ENCODE measurements at regions of chr17 and their contacts with region 1.

Region 1: DNA sequence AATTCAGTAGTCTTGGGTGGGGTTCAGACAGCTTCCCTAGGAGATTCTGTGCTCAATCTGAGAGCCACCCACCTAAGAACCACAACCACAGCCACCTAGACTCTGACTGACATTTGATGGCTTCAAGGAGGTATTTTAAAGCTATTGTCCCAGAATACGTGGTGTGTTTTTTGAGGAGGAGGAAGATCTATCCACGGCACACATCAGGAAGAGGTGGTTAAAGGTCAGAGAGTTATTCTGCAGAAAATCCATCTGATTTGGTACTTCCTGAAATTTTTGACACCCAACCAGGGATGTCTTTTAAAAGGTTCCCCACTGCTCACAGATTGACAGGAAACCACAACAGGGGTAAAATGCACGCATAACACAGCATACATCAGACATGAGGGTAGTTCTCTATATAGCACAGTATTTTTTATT is 25.1 kb downstream of the SMARCE1 start:
- DNase-seq: peak; percentile 3
- H3K4me3 Mint-ChIP-seq: no peak overlapping the region
- H3K27ac Mint-ChIP-seq: no peak overlapping the region
- H3K4me1 Mint-ChIP-seq: peaks cover 14% of the 10 kb centered on the region
- H3K27me3 Mint-ChIP-seq: peaks cover 56% of the 10 kb centered on the region
- CTCF ChIP-seq: no peak

Region 2: GRCh38 chr17:40559954-40560591 is 62.4 kb before region 1 on chr17:
- CTCF ChIA-PET with region 1: interaction called, 50 read pairs
- intact Hi-C with region 1: no loop called
- DNase-seq: peak; percentile 100
- H3K4me3 Mint-ChIP-seq: peak overlapping the region; percentile 47
- H3K27ac Mint-ChIP-seq: no peak overlapping the region
- H3K4me1 Mint-ChIP-seq: peaks cover 17% of the 10 kb centered on the region
- H3K27me3 Mint-ChIP-seq: peaks cover 99% of the 10 kb centered on the region
- CTCF ChIP-seq: no peak

Region 3: GRCh38 chr17:40664582-40665333 is 42.2 kb after region 1 on chr17 and contains the start of gene KRT222:
- CTCF ChIA-PET with region 1: interaction called, 36 read pairs
- intact Hi-C with region 1: no loop called
- DNase-seq: no peak
- H3K4me3 Mint-ChIP-seq: peak within 1 kb of the TSS; percentile 46
- H3K27ac Mint-ChIP-seq: no peak within 1 kb of the TSS
- H3K4me1 Mint-ChIP-seq: peaks cover 19% of the 10 kb centered on the region
- H3K27me3 Mint-ChIP-seq: peaks cover 86% of the 10 kb centered on the region
- CTCF ChIP-seq: no peak
- total RNA-seq, gene KRT222: not detected in 2 replicates

Region 4: DNA sequence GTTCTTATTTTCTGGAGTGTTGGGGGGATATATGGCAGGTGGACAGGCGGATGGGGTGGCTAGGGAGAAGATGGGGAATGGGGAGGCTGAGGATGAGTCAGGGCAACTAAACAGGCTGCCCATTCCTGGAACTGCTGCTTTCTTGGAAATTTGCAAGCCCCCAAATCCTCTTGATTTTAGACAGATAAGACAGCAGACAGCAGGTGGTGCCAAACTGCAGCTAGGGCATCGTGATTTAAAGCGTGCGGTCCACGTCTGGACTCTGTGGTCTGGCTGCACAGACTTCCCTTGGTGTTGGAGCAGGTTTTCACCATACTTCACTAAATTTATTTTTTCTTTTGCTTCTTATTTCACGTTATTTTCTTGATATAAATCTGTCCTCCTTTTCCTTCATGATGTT is 92.0 kb after region 1 on chr17:
- CTCF ChIA-PET with region 1: interaction called, 10 read pairs
- intact Hi-C with region 1: no loop called
- DNase-seq: no peak
- H3K4me3 Mint-ChIP-seq: no peak overlapping the region
- H3K27ac Mint-ChIP-seq: no peak overlapping the region
- H3K4me1 Mint-ChIP-seq: no peaks in the 10 kb centered on the region
- H3K27me3 Mint-ChIP-seq: peaks cover 60% of the 10 kb centered on the region
- CTCF ChIP-seq: peak; percentile 66

Region 5: DNA sequence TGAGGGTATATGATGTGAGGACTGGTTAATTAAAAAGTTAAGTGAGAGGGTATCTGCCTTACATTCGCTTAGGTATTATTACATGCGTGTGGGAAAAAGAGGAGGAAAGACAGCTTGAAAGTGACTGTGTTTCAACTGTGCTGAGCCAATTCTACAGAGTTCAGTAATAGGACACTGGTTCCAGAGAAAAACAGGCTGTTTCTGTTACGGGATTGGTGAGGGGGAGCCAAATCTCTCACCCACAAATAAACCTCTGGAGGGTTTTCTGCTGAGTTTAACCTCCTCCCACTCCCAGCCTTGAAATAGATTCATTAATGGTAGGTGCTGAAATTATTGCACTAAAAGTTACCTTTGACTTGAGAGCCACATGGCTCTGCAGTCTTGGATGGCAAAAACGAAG is 153.4 kb after region 1 on chr17:
- CTCF ChIA-PET with region 1: interaction called, 14 read pairs
- intact Hi-C with region 1: no loop called
- DNase-seq: no peak
- H3K4me3 Mint-ChIP-seq: no peak overlapping the region
- H3K27ac Mint-ChIP-seq: no peak overlapping the region
- H3K4me1 Mint-ChIP-seq: no peaks in the 10 kb centered on the region
- H3K27me3 Mint-ChIP-seq: peaks cover 83% of the 10 kb centered on the region
- CTCF ChIP-seq: no peak

Measured in Calu3 (cell line).